ENCODE measurements at regions of chr11 and their contacts with region 1.

Region 1: GRCh38 chr11:61947486-61948210 is 2.5 kb upstream of the BEST1 start:
- DNase-seq: peak; percentile 49
- H3K4me3 Mint-ChIP-seq: no peak overlapping the region
- H3K27ac Mint-ChIP-seq: no peak overlapping the region
- H3K4me1 Mint-ChIP-seq: no peaks in the 10 kb centered on the region
- H3K27me3 Mint-ChIP-seq: peaks cover 4% of the 10 kb centered on the region

Region 2: GRCh38 chr11:61871158-61871597 is 76.5 kb before region 1 on chr11:
- intact Hi-C with region 1: loop called (anchors 1 kb)
- DNase-seq: peak; percentile 61
- H3K4me3 Mint-ChIP-seq: peak overlapping the region; percentile 67
- H3K27ac Mint-ChIP-seq: no peak overlapping the region
- H3K4me1 Mint-ChIP-seq: peaks cover 4% of the 10 kb centered on the region
- H3K27me3 Mint-ChIP-seq: no peaks in the 10 kb centered on the region

Region 3: GRCh38 chr11:61967116-61967923 is 19.7 kb after region 1 on chr11 and contains the start of gene FTH1:
- intact Hi-C with region 1: no loop called
- DNase-seq: peak; percentile 84
- H3K4me3 Mint-ChIP-seq: peak within 1 kb of the TSS; percentile 93
- H3K27ac Mint-ChIP-seq: peak within 1 kb of the TSS; percentile 90
- H3K4me1 Mint-ChIP-seq: peaks cover 59% of the 10 kb centered on the region
- H3K27me3 Mint-ChIP-seq: no peaks in the 10 kb centered on the region
- total RNA-seq, gene FTH1: 568 and 585 TPM in 2 replicates

Measured in activated T-helper 2 cell treated with anti-CD3 and anti-CD28 coated beads, Interferon-gamma antibody, Interleukin-2, Interleukin-4, amounts not matched to agents 10 μg/mL and 5 μg/mL and 100 μg/mL, durations not matched to agents 14 hours and 24 hours and 36 hours (primary cell).